ENCODE measurements at regions of chr5 and their contacts with region 1.

Region 1: GRCh38 chr5:37165761-37166160 is 83.4 kb downstream of the CPLANE1 start:
- DNase-seq: no peak
- ATAC-seq: no peak
- H3K4me3 ChIP-seq: no peak overlapping the region
- H3K27ac ChIP-seq: no peak overlapping the region
- H3K4me1 ChIP-seq: no peaks in the 10 kb centered on the region
- H3K27me3 ChIP-seq: no peaks in the 10 kb centered on the region
- CTCF ChIP-seq: no peak
- POLR2A ChIP-seq: no peak

Region 2: DNA sequence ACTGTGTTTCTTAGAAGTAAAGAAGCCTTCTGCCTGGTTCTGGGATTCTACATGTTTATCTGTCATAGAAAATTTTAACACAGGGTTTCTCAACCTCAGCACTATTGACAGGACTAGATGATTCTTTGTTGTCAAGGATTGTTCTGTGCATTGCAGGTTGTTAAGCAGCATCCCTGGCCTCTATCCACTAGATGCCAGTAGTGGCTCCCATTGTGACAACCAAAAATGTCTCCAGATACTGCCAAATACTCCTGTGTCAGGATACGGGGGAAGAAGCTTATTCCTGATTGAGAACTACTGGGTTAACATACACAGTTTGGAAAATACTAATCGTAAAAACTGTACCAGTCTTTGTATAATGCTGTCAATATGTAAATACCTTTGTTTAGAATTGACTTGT is 122.1 kb before region 1 on chr5:
- intact Hi-C with region 1: loop called in 1 of 10 experiments (anchors 10 kb)
- DNase-seq: no peak
- ATAC-seq: no peak
- H3K4me3 ChIP-seq: no peak overlapping the region
- H3K27ac ChIP-seq: no peak overlapping the region
- H3K4me1 ChIP-seq: no peaks in the 10 kb centered on the region
- H3K27me3 ChIP-seq: no peaks in the 10 kb centered on the region
- CTCF ChIP-seq: no peak
- POLR2A ChIP-seq: no peak

Region 3: GRCh38 chr5:37222176-37222575 is 56.4 kb after region 1 on chr5:
- intact Hi-C with region 1: no loop called
- DNase-seq: no peak
- ATAC-seq: no peak
- H3K4me3 ChIP-seq: no peak overlapping the region
- H3K27ac ChIP-seq: no peak overlapping the region
- H3K4me1 ChIP-seq: no peaks in the 10 kb centered on the region
- H3K27me3 ChIP-seq: no peaks in the 10 kb centered on the region
- CTCF ChIP-seq: no peak
- POLR2A ChIP-seq: no peak

Region 4: GRCh38 chr5:37710965-37711364 is 545.2 kb after region 1 on chr5:
- intact Hi-C with region 1: no loop called
- DNase-seq: no peak
- ATAC-seq: peak in 1 of 4 donors; percentile 34
- H3K4me3 ChIP-seq: no peak overlapping the region
- H3K27ac ChIP-seq: no peak overlapping the region
- H3K4me1 ChIP-seq: no peaks in the 10 kb centered on the region
- H3K27me3 ChIP-seq: no peaks in the 10 kb centered on the region
- CTCF ChIP-seq: no peak
- POLR2A ChIP-seq: no peak

Measured in heart left ventricle (tissue), 16 donors.